ENCODE measurements at regions of chr1 and their contacts with region 1.

Region 1: DNA sequence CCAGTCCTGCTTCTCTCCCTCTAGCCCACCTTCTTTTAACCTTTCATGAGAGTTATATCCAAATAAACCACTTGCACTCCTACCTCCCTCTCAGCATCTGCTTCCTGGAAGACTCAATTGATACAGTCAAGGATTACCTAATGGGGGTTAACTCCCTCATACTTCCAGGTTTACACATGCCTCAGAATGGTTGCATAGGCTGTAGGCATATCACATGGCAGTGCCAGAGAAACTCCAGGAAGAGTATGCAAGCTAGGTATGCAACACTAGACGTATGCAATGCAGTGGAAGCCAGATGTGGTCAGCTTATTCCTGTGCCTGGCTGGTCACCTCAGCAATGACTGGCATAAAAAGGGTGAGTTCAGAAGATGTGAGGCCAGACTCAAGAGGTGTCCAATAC is 32.7 kb upstream of the VANGL1 start:
- H3K4me3 Mint-ChIP-seq: no peak overlapping the region
- H3K27ac Mint-ChIP-seq: no peak overlapping the region
- H3K4me1 Mint-ChIP-seq: no peaks in the 10 kb centered on the region
- H3K27me3 Mint-ChIP-seq: peaks cover 8% of the 10 kb centered on the region

Region 2: GRCh38 chr1:115706587-115707425 is 97.8 kb after region 1 on chr1:
- intact Hi-C with region 1: loop called (anchors 2 kb)
- H3K4me3 Mint-ChIP-seq: no peak overlapping the region
- H3K27ac Mint-ChIP-seq: no peak overlapping the region
- H3K4me1 Mint-ChIP-seq: no peaks in the 10 kb centered on the region
- H3K27me3 Mint-ChIP-seq: peaks cover 14% of the 10 kb centered on the region

Region 3: GRCh38 chr1:115764541-115764940 is 155.5 kb after region 1 on chr1:
- intact Hi-C with region 1: loop called (anchors 2 kb)
- H3K4me3 Mint-ChIP-seq: no peak overlapping the region
- H3K27ac Mint-ChIP-seq: no peak overlapping the region
- H3K4me1 Mint-ChIP-seq: peaks cover 17% of the 10 kb centered on the region
- H3K27me3 Mint-ChIP-seq: no peaks in the 10 kb centered on the region

Region 4: GRCh38 chr1:115771847-115772457 is 162.9 kb after region 1 on chr1:
- intact Hi-C with region 1: loop called (anchors 2 kb)
- H3K4me3 Mint-ChIP-seq: no peak overlapping the region
- H3K27ac Mint-ChIP-seq: no peak overlapping the region
- H3K4me1 Mint-ChIP-seq: no peaks in the 10 kb centered on the region
- H3K27me3 Mint-ChIP-seq: peaks cover 9% of the 10 kb centered on the region

Measured in dendritic cell treated with granulocyte-macrophage colony-stimulating factor and Interleukin-4, amounts not matched to agents 40 ng/mL and 50 ng/mL, for 4 days (primary cell).